PC-3 (cell line): ENCODE measurements at regions of chr2 and their contacts with region 1.

Region 1: GRCh38 chr2:106886916-106887758 is 1.2 kb upstream of the ST6GAL2 start:
- DNase-seq: peak; percentile 92
- ATAC-seq: peak; percentile 78
- H3K4me3 ChIP-seq: peak overlapping the region; percentile 83
- H3K27ac ChIP-seq: peak overlapping the region; percentile 88
- H3K4me1 ChIP-seq: peaks cover 21% of the 10 kb centered on the region
- H3K27me3 ChIP-seq: no peaks in the 10 kb centered on the region
- CTCF ChIP-seq: no peak; the same call in 1 of the 2 replicates

Region 2: DNA sequence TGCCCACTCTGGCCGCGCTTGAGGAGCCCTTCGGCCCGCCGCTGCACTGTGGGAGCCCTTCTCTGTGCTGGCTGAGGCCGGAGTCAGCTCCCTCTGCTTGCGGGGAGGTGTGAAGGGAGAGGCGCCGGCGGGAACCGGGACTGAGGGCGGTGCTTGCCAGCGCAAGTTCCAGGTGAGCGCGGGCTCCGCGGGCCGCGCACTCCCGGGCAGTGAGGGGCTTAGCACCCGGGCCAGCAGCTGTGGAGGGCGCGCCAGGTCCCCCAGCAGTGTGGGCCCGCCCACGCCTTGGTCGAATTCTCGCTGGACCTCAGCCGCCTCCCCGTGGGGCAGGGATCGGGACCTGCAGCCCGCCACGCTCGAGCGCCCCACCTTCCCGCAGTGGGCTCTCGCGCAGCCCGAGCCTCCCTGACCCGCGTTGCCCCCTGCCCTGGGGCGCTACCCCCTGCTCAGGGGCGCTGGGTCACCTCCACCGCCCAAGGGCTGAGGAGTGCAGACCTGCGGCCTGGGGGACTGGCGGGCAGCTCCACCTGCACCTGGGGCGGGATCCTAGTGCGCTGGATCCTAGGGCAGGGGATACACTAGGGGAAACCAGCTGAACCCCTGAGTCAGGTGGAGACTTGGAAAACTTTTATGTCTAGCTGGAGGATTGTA is 302.7 kb before region 1 on chr2:
- CTCF ChIA-PET with region 1: no interaction called
- POLR2A ChIA-PET with region 1: no interaction called
- intact Hi-C with region 1: no loop called
- DNase-seq: no peak
- ATAC-seq: no peak
- H3K4me3 ChIP-seq: no peak overlapping the region
- H3K27ac ChIP-seq: no peak overlapping the region
- H3K4me1 ChIP-seq: no peaks in the 10 kb centered on the region
- H3K27me3 ChIP-seq: peaks cover 26% of the 10 kb centered on the region
- CTCF ChIP-seq: no peak

Region 3: DNA sequence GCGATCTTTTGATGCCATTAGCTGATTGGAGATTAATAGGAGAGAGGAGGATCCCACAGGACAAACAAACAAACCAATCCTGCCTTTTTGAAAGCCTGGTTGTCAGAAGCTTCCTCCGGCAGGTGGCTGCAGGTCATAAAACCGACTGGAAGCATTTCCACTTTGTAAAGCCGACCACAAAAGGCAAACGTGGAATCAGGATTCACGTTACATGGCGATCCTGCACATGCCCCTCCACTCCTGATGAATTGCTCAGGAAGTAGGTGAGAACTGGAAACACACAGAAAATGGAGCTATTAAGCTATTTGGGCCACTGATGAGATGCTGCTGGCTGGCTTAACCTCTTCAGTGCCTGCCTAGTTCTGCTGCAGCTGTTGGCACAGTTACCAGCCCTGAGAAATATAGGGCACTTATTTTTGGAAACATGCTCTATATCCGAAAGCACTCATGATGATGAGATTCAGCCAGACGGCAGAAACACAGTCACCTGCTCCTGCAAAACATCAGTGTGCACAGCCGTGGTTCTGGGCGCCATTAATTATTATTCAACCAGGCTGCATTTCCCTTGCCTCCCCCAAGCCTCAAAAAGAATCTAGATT is 109.1 kb after region 1 on chr2:
- CTCF ChIA-PET with region 1: no interaction called
- POLR2A ChIA-PET with region 1: no interaction called
- intact Hi-C with region 1: loop called (anchors 2 kb)
- DNase-seq: peak; percentile 44
- ATAC-seq: peak; percentile 1; the same call in 1 of the 2 replicates
- H3K4me3 ChIP-seq: no peak overlapping the region
- H3K27ac ChIP-seq: peak overlapping the region; percentile 91
- H3K4me1 ChIP-seq: peaks cover 61% of the 10 kb centered on the region
- H3K27me3 ChIP-seq: no peaks in the 10 kb centered on the region
- CTCF ChIP-seq: no peak

Region 4: DNA sequence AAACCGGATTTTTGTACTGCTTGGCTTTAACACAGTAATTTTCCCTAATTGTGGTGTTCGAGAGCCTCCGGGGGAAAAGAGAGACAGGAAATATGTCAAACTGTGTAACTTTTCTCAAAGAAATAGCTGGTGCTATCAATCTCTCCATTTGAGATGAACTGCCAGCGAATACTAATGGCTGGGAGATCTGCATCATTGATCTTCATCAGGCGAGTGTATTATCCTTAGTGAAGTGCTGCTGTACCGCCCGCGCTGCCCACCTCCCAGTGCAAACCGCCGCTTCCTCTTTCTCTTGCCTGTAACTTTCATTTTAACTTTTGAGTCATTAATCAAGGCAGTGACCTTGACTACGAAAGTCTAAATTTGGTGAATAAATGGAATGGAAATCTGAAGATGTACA is 244.9 kb after region 1 on chr2:
- CTCF ChIA-PET with region 1: no interaction called
- POLR2A ChIA-PET with region 1: no interaction called
- intact Hi-C with region 1: loop called (anchors 10 kb)
- DNase-seq: no peak
- ATAC-seq: peak; percentile 46; the same call in 1 of the 2 replicates
- H3K4me3 ChIP-seq: peak overlapping the region; percentile 55
- H3K27ac ChIP-seq: no peak overlapping the region
- H3K4me1 ChIP-seq: no peaks in the 10 kb centered on the region
- H3K27me3 ChIP-seq: peaks cover 94% of the 10 kb centered on the region
- CTCF ChIP-seq: no peak

Region 5: GRCh38 chr2:107263628-107264027 is 376.5 kb after region 1 on chr2:
- CTCF ChIA-PET with region 1: no interaction called
- POLR2A ChIA-PET with region 1: no interaction called
- intact Hi-C with region 1: no loop called
- DNase-seq: no peak
- ATAC-seq: no peak
- H3K4me3 ChIP-seq: no peak overlapping the region
- H3K27ac ChIP-seq: no peak overlapping the region
- H3K4me1 ChIP-seq: no peaks in the 10 kb centered on the region
- H3K27me3 ChIP-seq: peaks cover 79% of the 10 kb centered on the region
- CTCF ChIP-seq: no peak